Heart left ventricle (tissue), 16 donors: ENCODE measurements at regions of chr12 and their contacts with region 1.

Region 1: GRCh38 chr12:65169320-65170208 is at the start of gene LEMD3:
- DNase-seq: peak; percentile 93 to 96 (median 95)
- ATAC-seq: peak; percentile 97 to 98 (median 97)
- H3K4me3 ChIP-seq: peak within 1 kb of the TSS; percentile 78 to 99 (median 96)
- H3K27ac ChIP-seq: peak within 1 kb of the TSS; percentile 88 to 97 (median 94)
- H3K4me1 ChIP-seq: peaks cover 0 to 48% (median 42%) of the 10 kb centered on the region in 12 donors
- H3K27me3 ChIP-seq: no peaks in the 10 kb centered on the region
- CTCF ChIP-seq: peak in 1 of 12 donors; percentile 3
- POLR2A ChIP-seq: peak in 1 of 2 donors; percentile 76
- total RNA-seq, gene LEMD3: 10.8 to 19.9 (median 13.2) TPM

Region 2: GRCh38 chr12:64650762-64651161 is 518.8 kb before region 1 on chr12:
- intact Hi-C with region 1: no loop called
- DNase-seq: no peak
- ATAC-seq: peak; percentile 34 to 74 (median 60)
- H3K4me3 ChIP-seq: no peak overlapping the region
- H3K27ac ChIP-seq: peak overlapping the region in 11 of 12 donors; percentile 9 to 75 (median 44)
- H3K4me1 ChIP-seq: peaks cover 0 to 55% (median 25%) of the 10 kb centered on the region in 12 donors
- H3K27me3 ChIP-seq: no peaks in the 10 kb centered on the region
- CTCF ChIP-seq: no peak
- POLR2A ChIP-seq: no peak

Region 3: DNA sequence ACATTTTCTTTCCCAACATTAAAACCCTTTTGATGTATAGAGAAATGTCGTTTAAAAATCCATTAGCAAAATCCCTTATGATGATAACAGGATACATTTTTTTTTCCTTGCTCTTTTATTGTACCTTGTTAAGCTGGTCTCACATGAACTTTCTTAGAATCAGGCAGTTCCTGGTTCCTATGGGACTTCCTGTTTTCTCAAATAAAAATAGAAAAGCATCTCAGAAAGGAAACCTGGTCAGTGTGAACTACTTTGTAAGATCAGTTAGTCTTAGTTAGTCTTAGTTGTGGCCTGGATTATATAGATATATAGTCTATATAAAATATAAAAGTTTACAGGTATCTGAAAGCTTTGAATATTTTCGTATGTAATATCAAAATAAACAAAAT is 40.1 kb after region 1 on chr12:
- intact Hi-C with region 1: loop called in 1 of 10 experiments (anchors 5 kb)
- DNase-seq: no peak
- ATAC-seq: peak in 1 of 4 donors; percentile 77
- H3K4me3 ChIP-seq: no peak overlapping the region
- H3K27ac ChIP-seq: peak overlapping the region in 3 of 12 donors; percentile 21 to 48 (median 29)
- H3K4me1 ChIP-seq: peaks cover 0 to 42% (median 28%) of the 10 kb centered on the region in 12 donors
- H3K27me3 ChIP-seq: no peaks in the 10 kb centered on the region
- CTCF ChIP-seq: no peak
- POLR2A ChIP-seq: no peak

Region 4: GRCh38 chr12:65232476-65233077 is 63.0 kb after region 1 on chr12:
- intact Hi-C with region 1: loop called in 5 of 10 experiments (anchors 2 to 10 kb)
- DNase-seq: no peak
- ATAC-seq: no peak
- H3K4me3 ChIP-seq: no peak overlapping the region
- H3K27ac ChIP-seq: no peak overlapping the region
- H3K4me1 ChIP-seq: peaks cover 0 to 5% (median 0%) of the 10 kb centered on the region in 12 donors
- H3K27me3 ChIP-seq: no peaks in the 10 kb centered on the region
- CTCF ChIP-seq: peak; percentile 33 to 71 (median 55)
- POLR2A ChIP-seq: no peak